ENCODE measurements at regions of chr19 and their contacts with region 1.

Region 1: DNA sequence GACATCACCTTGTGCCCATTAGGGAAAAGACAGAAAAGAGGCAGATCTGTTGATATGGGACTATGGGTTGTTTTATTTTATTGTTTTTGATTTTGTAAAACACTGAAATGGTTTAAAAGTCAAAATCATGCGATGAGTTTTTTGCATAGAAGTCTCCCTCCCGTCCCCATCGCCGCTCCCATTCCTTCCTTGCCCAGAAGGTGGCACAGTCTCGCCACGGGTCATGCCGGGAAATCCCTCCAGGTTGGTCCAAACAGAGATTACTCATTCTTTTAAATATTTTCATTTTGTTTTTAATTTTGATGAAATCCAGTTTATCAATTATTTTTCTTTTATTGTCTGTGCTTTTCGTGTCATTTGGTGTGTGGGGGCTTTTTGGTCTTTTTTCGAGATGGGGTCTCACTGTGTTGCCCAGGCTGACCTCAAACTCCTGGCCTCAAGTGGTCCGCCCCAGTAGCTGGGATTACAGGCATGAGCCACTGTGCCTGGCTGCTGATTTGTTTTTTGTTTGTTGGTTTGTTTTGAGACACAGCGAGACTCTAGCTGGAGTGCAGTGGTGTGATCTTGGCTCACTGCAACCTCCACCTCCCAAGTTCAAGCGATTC is 9.2 kb downstream of the PGPEP1 start:
- DNase-seq: peak; percentile 56 to 78 (median 73)
- H3K4me3 ChIP-seq: no peak overlapping the region
- H3K27ac ChIP-seq: no peak overlapping the region
- H3K4me1 ChIP-seq: no peaks in the 10 kb centered on the region
- H3K27me3 ChIP-seq: no peaks in the 10 kb centered on the region
- CTCF ChIP-seq: peak; percentile 48 to 67 (median 64)
- EP300 ChIP-seq: no peak
- POLR2A ChIP-seq: no peak

Region 2: DNA sequence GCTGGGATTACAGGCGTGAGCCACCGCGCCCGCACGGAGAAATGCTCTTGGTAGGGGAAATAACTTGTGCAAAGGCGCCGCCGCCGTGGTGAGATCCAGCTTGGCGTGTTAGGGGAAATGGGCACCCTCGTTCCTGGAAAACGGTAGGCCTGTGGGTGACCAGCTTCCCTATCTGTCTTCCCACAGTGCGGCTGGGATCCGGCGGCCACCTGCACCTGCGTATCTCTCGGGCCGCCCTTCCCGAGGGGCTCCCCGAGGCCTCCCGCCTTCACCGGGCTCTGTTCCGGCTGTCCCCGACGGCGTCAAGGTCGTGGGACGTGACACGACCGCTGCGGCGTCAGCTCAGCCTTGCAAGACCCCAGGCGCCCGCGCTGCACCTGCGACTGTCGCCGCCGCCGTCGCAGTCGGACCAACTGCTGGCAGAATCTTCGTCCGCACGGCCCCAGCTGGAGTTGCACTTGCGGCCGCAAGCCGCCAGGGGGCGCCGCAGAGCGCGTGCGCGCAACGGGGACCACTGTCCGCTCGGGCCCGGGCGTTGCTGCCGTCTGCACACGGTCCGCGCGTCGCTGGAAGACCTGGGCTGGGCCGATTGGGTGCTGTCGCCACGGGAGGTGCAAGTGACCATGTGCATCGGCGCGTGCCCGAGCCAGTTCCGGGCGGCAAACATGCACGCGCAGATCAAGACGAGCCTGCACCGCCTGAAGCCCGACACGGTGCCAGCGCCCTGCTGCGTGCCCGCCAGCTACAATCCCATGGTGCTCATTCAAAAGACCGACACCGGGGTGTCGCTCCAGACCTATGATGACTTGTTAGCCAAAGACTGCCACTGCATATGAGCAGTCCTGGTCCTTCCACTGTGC is 38.7 kb after region 1 on chr19:
- intact Hi-C with region 1: loop called in 2 of 4 experiments (anchors 5 kb)
- DNase-seq: peak; percentile 69 to 87 (median 80)
- H3K4me3 ChIP-seq: peak overlapping the region; percentile 17
- H3K27ac ChIP-seq: no peak overlapping the region
- H3K4me1 ChIP-seq: peaks cover 5% of the 10 kb centered on the region
- H3K27me3 ChIP-seq: no peaks in the 10 kb centered on the region
- CTCF ChIP-seq: peak; percentile 97 to 99 (median 98)
- EP300 ChIP-seq: no peak
- POLR2A ChIP-seq: no peak

Region 3: DNA sequence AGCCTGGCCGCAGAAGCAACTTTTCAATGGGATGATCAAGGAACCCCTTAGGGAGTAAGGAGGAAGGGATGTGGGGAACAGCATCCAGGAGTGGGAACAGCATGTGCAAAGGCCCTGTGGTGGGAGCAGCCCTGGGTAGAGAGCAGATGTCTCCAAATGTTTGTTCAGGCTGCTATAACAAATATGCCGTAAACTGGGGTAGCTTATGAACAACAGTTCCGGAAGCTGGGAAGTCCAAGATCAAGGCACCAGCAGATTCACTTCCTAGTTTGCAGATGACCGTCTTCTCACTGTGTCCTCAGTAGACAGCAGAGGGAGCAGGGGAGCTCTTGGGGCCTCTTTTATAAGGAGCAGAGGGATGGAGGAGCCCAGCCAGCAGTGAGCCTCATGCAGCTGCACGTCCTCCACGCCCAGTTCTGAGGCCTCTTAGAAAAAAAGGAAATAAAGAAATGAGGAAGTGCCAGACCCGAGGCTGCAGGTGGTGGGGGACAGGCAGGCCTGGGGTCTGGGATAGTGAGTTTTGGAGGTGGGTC is 52.0 kb after region 1 on chr19:
- intact Hi-C with region 1: loop called in 1 of 4 experiments (anchors 10 kb)
- DNase-seq: no peak
- H3K4me3 ChIP-seq: no peak overlapping the region
- H3K27ac ChIP-seq: no peak overlapping the region
- H3K4me1 ChIP-seq: peaks cover 9% of the 10 kb centered on the region
- H3K27me3 ChIP-seq: no peaks in the 10 kb centered on the region
- CTCF ChIP-seq: no peak
- EP300 ChIP-seq: no peak
- POLR2A ChIP-seq: no peak

Region 4: DNA sequence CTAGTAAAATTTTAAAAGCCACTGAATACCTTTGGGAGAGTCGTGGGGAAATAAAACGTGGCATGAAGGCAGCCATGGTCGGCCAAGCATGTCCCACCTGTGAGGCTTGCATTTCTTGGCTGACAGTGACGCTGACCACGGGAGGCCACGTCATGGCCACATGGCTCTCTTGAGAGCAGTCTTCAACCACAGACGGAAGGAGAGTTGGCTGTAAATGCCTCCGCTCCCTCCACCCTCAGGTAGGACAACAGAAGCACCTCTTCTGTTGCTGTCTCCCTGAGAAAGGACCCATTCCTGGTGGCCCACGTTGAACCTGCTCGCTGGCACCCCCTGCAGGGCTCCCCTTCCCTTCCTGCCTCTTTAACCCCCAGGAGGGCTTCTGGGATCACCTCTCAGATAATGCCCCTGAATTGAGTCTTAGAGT is 58.4 kb after region 1 on chr19:
- intact Hi-C with region 1: loop called (anchors 2 to 10 kb)
- DNase-seq: no peak
- H3K4me3 ChIP-seq: no peak overlapping the region
- H3K27ac ChIP-seq: no peak overlapping the region
- H3K4me1 ChIP-seq: no peaks in the 10 kb centered on the region
- H3K27me3 ChIP-seq: no peaks in the 10 kb centered on the region
- CTCF ChIP-seq: no peak
- EP300 ChIP-seq: no peak
- POLR2A ChIP-seq: no peak

Measured in ovary (tissue), 10 donors.